ENCODE measurements at regions of chr1 and their contacts with region 1.

Region 1: DNA sequence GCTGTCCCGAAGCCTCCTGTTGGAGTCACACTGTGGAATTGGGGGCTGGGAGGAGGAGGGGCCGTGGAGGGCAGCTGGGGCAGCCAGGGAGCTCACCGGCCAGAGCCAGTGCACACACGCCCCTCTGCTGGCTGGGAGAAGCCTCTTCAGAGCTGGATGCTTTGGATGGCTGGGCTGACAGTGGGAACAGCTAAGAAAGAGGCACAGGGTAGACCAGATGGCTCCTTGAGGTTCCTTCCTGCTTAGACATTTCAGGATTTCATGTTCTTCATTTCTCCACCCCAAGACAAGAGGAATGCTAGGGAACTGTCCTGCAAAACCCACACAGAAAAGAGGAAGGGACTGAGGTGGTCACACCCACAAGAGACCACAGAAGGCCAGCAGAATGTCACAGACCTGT is 254.8 kb upstream of the VAMP3 start:
- DNase-seq: no peak
- H3K4me3 ChIP-seq: no peak overlapping the region
- H3K27ac ChIP-seq: no peak overlapping the region
- H3K4me1 ChIP-seq: no peaks in the 10 kb centered on the region
- H3K27me3 ChIP-seq: no peaks in the 10 kb centered on the region
- CTCF ChIP-seq: no peak

Region 2: DNA sequence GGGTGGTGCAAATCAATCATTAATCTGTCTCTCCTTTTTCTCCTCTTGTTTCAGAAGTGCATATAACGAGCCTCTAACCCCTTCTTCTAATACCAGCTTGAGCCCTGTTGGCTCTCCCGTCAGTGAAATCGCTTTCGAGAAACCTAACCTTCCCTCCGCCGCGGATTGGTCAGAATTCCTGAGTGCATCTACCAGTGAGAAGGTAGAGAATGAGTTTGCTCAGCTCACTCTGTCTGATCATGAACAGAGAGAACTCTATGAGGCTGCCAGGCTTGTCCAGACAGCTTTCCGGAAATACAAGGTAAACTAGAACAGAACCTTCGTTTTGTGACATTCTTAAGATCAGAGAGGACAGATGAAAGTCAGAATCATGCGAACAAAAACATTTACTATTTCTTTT is 229.4 kb after region 1 on chr1:
- CTCF ChIA-PET with region 1: interaction called, 13 read pairs
- dilution Hi-C with region 1: no loop called
- in situ Hi-C with region 1: no loop called
- intact Hi-C with region 1: no loop called
- DNase-seq: peak; percentile 90
- H3K4me3 ChIP-seq: peak overlapping the region in 2 of 3 experiments; percentile 20 to 46
- H3K27ac ChIP-seq: peak overlapping the region; percentile 64
- H3K4me1 ChIP-seq: peaks cover 14% of the 10 kb centered on the region
- H3K27me3 ChIP-seq: no peaks in the 10 kb centered on the region
- CTCF ChIP-seq: no peak